Activated CD4-positive, alpha-beta memory T cell treated with anti-CD3 and anti-CD28 coated beads, Interleukin-2, amount 10 ng/mL, durations not matched to agents 7 days and 5 days (primary cell): ENCODE measurements at regions of chr7 and their contacts with region 1.

Region 1: GRCh38 chr7:30062591-30062990 is 34.4 kb downstream of the PLEKHA8 start:
- DNase-seq: no peak
- H3K4me3 Mint-ChIP-seq: no peak overlapping the region
- H3K27ac Mint-ChIP-seq: no peak overlapping the region
- H3K4me1 Mint-ChIP-seq: peaks cover 4% of the 10 kb centered on the region
- H3K27me3 Mint-ChIP-seq: no peaks in the 10 kb centered on the region

Region 2: GRCh38 chr7:29921404-29922010 is 141.1 kb before region 1 on chr7:
- CTCF ChIA-PET with region 1: interaction called, 10 read pairs
- POLR2A ChIA-PET with region 1: no interaction called
- DNase-seq: peak; percentile 30
- H3K4me3 Mint-ChIP-seq: no peak overlapping the region
- H3K27ac Mint-ChIP-seq: no peak overlapping the region
- H3K4me1 Mint-ChIP-seq: no peaks in the 10 kb centered on the region
- H3K27me3 Mint-ChIP-seq: peaks cover 3% of the 10 kb centered on the region

Region 3: GRCh38 chr7:30028193-30028748 is 34.3 kb before region 1 on chr7 and contains the start of gene PLEKHA8:
- CTCF ChIA-PET with region 1: interaction called, 24 read pairs
- POLR2A ChIA-PET with region 1: interaction called, 5 read pairs
- DNase-seq: peak; percentile 91
- H3K4me3 Mint-ChIP-seq: peak within 1 kb of the TSS; percentile 82
- H3K27ac Mint-ChIP-seq: peak within 1 kb of the TSS; percentile 87
- H3K4me1 Mint-ChIP-seq: peaks cover 35% of the 10 kb centered on the region
- H3K27me3 Mint-ChIP-seq: no peaks in the 10 kb centered on the region
- total RNA-seq, gene PLEKHA8: 10.3 to 10.7 TPM

Region 4: GRCh38 chr7:30074422-30075030 is 11.9 kb after region 1 on chr7:
- CTCF ChIA-PET with region 1: interaction called, 18 read pairs
- POLR2A ChIA-PET with region 1: no interaction called
- DNase-seq: no peak
- H3K4me3 Mint-ChIP-seq: no peak overlapping the region
- H3K27ac Mint-ChIP-seq: no peak overlapping the region
- H3K4me1 Mint-ChIP-seq: no peaks in the 10 kb centered on the region
- H3K27me3 Mint-ChIP-seq: no peaks in the 10 kb centered on the region

Region 5: GRCh38 chr7:30088362-30088761 is 25.8 kb after region 1 on chr7:
- CTCF ChIA-PET with region 1: no interaction called
- POLR2A ChIA-PET with region 1: no interaction called
- DNase-seq: no peak
- H3K4me3 Mint-ChIP-seq: no peak overlapping the region
- H3K27ac Mint-ChIP-seq: no peak overlapping the region
- H3K4me1 Mint-ChIP-seq: peaks cover 4% of the 10 kb centered on the region
- H3K27me3 Mint-ChIP-seq: no peaks in the 10 kb centered on the region